K562 (cell line): ENCODE measurements at regions of chr4 and their contacts with region 1.

Region 1: DNA sequence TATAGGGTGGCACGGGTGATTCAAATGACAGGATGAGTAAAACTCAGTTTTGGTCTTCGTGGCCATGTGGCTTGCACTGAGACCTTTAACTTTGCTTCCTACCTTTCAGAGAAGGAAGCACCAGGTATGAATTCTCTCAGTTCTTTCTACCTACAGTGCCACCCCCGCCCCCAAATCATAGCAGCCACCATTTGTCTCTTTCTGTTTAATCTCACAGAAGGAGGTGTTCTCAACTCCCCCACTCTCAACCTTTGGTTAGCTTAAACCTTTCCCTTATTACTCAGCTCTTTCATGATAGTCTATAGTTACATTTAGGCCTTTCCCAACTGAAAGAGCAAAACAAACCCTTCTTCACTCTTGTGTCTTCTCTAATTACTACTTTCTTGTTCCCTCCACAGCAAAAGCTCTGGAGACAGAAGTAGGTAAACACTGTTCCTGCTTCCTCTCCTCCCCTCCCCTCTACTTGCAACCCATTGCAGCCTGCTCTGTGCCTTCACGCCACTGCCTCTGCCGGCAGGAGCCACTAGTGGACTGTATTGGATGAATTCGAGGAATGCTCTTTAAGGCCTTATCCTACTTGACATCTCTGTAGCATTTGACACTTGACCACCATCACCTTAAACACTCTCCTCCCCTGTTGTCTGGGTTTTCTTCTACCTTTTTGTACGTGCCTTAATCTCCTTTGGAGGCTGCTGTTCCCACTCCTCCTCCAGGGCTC is 123.7 kb downstream of the AFF1 start:
- DNase-seq: peak; percentile 39 to 77 (median 58)
- ATAC-seq: peak; percentile 92
- H3K4me3 ChIP-seq: no peak overlapping the region
- H3K27ac ChIP-seq: peak overlapping the region; percentile 41; the same call in 2 of the 3 replicates
- H3K4me1 ChIP-seq: peaks cover 11 to 46% of the 10 kb centered on the region in 2 experiments; a peak in 4 of 5 replicates
- H3K27me3 ChIP-seq: no peaks in the 10 kb centered on the region
- CTCF ChIP-seq: peak; percentile 64 to 73 (median 68)
- EP300 ChIP-seq: peak; percentile 22; the same call in 1 of the 2 replicates
- POLR2A ChIP-seq: no peak
- RAD21 ChIP-seq: peak; percentile 53 to 74

Region 2: GRCh38 chr4:86769794-86770193 is 288.7 kb before region 1 on chr4:
- CTCF ChIA-PET with region 1: no interaction called
- POLR2A ChIA-PET with region 1: no interaction called
- in situ Hi-C with region 1: no loop called
- intact Hi-C with region 1: no loop called
- DNase-seq: no peak
- ATAC-seq: no peak
- H3K4me3 ChIP-seq: no peak overlapping the region
- H3K27ac ChIP-seq: no peak overlapping the region
- H3K4me1 ChIP-seq: no peaks in the 10 kb centered on the region
- H3K27me3 ChIP-seq: no peaks in the 10 kb centered on the region
- CTCF ChIP-seq: no peak
- EP300 ChIP-seq: no peak
- POLR2A ChIP-seq: no peak
- RAD21 ChIP-seq: no peak

Region 3: GRCh38 chr4:86921608-86922252 is 136.8 kb before region 1 on chr4:
- CTCF ChIA-PET with region 1: interaction called, 3 read pairs
- POLR2A ChIA-PET with region 1: no interaction called
- in situ Hi-C with region 1: no loop called
- intact Hi-C with region 1: loop called (anchors 1 kb)
- DNase-seq: no peak
- ATAC-seq: no peak
- H3K4me3 ChIP-seq: no peak overlapping the region
- H3K27ac ChIP-seq: no peak overlapping the region
- H3K4me1 ChIP-seq: peaks cover 10 to 17% of the 10 kb centered on the region in 2 experiments; a peak in 4 of 5 replicates
- H3K27me3 ChIP-seq: no peaks in the 10 kb centered on the region
- CTCF ChIP-seq: no peak
- EP300 ChIP-seq: no peak
- POLR2A ChIP-seq: no peak
- RAD21 ChIP-seq: no peak